Activated naive CD4-positive, alpha-beta T cell treated with anti-CD3 and anti-CD28 coated beads for 36 hours (primary cell): ENCODE measurements at regions of chr12 and their contacts with region 1.

Region 1: DNA sequence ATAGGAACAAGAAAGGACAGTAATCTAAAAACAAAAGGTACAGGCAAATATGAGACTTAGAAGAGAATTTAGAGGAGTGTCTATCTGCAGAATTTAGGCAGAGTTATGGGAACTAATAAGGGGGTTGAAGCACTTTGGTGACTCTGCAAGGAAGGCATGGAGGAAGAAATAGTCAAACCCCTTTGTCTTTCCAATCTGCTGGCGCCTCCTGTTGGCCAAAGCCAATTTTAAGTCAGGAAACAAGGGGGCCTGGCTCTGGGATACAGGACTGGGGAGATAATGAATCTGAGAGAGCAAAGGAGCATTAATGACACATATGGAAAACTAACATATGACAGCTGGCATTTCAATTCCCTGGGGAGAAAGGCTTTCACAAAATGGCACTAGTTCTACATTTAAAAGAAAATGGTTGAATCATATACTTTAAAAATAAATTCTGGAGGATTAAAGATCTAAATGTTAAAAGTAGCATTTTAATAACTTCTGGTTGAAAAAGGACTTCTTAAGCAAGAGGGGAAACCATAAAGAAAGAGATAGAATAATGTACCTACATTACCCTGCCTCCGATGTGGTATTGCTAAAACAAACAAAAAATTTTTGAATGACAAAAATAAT is 48.5 kb upstream of the CSRP2 start:
- DNase-seq: peak; percentile 70
- H3K4me3 Mint-ChIP-seq: no peak overlapping the region
- H3K27ac Mint-ChIP-seq: no peak overlapping the region
- H3K4me1 Mint-ChIP-seq: no peaks in the 10 kb centered on the region
- H3K27me3 Mint-ChIP-seq: peaks cover 6% of the 10 kb centered on the region

Region 2: DNA sequence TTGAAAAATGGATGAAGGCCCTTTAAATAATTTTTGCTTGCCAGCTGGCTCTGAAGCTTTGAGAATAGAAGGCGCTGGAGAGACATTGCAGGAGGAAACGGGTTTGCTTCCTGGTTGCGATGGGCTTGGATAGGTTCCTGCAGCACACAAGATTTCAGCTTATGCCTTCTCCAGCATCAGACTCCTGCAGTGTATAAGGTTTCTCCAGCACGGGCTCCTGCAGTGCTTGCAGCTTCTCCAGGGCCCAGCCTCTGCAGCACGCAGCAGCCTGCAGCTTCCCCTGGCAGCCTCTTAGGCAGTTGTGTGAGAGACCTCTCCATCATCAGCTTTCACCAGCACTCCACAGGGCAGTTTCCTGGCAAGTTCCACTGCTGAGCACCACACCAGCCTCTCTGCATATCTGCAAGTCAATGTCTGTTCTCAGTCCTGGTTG is 242.0 kb before region 1 on chr12:
- CTCF ChIA-PET with region 1: no interaction called
- intact Hi-C with region 1: loop called (anchors 5 kb)
- DNase-seq: no peak
- H3K4me3 Mint-ChIP-seq: no peak overlapping the region
- H3K27ac Mint-ChIP-seq: no peak overlapping the region
- H3K4me1 Mint-ChIP-seq: peaks cover 6% of the 10 kb centered on the region
- H3K27me3 Mint-ChIP-seq: no peaks in the 10 kb centered on the region